Posterior vena cava (tissue), 2 donors: ENCODE measurements at regions of chr5 and their contacts with region 1.

Region 1: DNA sequence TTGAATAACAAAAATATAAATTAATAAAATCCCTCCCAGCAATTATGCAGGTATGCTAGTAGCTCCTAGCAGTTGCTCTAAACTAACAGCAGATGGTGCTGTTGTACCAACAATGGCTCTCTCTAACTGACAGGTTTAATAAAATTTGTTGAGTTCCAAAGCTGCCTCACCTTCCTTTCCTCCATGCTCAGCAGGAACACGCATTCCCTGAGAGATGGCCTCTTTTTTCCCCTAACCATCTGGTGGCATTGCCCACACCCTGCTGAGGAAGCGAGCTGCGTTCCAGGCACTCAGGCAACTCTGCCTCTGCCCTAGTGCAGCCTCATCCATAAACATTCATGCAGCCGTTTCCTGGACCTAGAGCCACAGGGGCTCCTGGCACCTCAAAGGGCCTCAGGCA is 106.2 kb downstream of the KLHL3 start:
- DNase-seq: no peak

Region 2: DNA sequence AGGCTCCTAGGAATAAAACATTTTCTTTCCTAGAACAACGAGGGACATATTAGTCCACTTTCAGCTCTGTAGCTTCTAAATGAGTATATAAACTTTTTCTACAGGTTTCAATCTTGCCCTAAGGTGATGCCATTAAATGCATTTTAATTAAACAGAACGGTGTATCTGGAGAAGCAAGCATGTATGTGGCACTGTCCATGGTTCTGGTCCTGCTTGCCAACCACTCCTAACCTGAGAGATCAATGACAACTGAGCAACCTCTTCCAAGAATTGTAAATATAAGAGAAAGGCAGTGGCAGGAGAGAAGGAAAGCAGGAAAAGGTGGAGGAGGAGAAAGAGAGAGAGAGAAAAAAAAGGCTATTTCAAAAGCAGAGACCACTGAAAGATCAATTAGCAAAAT is 34.9 kb before region 1 on chr5:
- intact Hi-C with region 1: no loop called
- DNase-seq: no peak

Region 3: GRCh38 chr5:137743031-137743640 is 113.5 kb after region 1 on chr5:
- intact Hi-C with region 1: loop called (anchors 1 to 2 kb)
- DNase-seq: no peak

Region 4: GRCh38 chr5:137815202-137815985 is 185.7 kb after region 1 on chr5:
- intact Hi-C with region 1: loop called in 1 of 2 experiments (anchors 10 kb)
- DNase-seq: no peak

Region 5: GRCh38 chr5:138069068-138069600 is 439.5 kb after region 1 on chr5:
- intact Hi-C with region 1: loop called in 1 of 2 experiments (anchors 2 kb)
- DNase-seq: no peak

Region 6: GRCh38 chr5:138138949-138139780 is 509.5 kb after region 1 on chr5 and contains the start of gene NME5:
- intact Hi-C with region 1: loop called in 1 of 2 experiments (anchors 10 kb)
- DNase-seq: peak; percentile 88
- total RNA-seq, gene NME5: 1.5 to 2.3 TPM